Activated CD8-positive, alpha-beta memory T cell treated with anti-CD3 and anti-CD28 coated beads, Interleukin-2, amount 10 ng/mL, durations not matched to agents 7 days and 5 days (primary cell): ENCODE measurements at regions of chr11 and their contacts with region 1.

Region 1: GRCh38 chr11:66694732-66695207 is 17.1 kb upstream of the RBM4B start:
- DNase-seq: peak; percentile 86
- ATAC-seq: peak; percentile 79
- H3K4me3 Mint-ChIP-seq: no peak overlapping the region
- H3K27ac Mint-ChIP-seq: no peak overlapping the region
- H3K4me1 Mint-ChIP-seq: no peaks in the 10 kb centered on the region
- H3K27me3 Mint-ChIP-seq: no peaks in the 10 kb centered on the region

Region 2: GRCh38 chr11:66386171-66387069 is 308.4 kb before region 1 on chr11:
- CTCF ChIA-PET with region 1: no interaction called
- DNase-seq: peak; percentile 90
- ATAC-seq: peak; percentile 79
- H3K4me3 Mint-ChIP-seq: peak overlapping the region; percentile 16
- H3K27ac Mint-ChIP-seq: no peak overlapping the region
- H3K4me1 Mint-ChIP-seq: peaks cover 7% of the 10 kb centered on the region
- H3K27me3 Mint-ChIP-seq: peaks cover 15% of the 10 kb centered on the region

Region 3: GRCh38 chr11:66638177-66639065 is 56.3 kb before region 1 on chr11 and contains the start of gene RBM4:
- CTCF ChIA-PET with region 1: no interaction called
- DNase-seq: peak; percentile 99
- ATAC-seq: peak; percentile 97
- H3K4me3 Mint-ChIP-seq: peak within 1 kb of the TSS; percentile 87
- H3K27ac Mint-ChIP-seq: peak within 1 kb of the TSS; percentile 97
- H3K4me1 Mint-ChIP-seq: peaks cover 61% of the 10 kb centered on the region
- H3K27me3 Mint-ChIP-seq: no peaks in the 10 kb centered on the region
- total RNA-seq, gene RBM4: 111 to 119 TPM

Region 4: GRCh38 chr11:66834501-66834845 is 139.7 kb after region 1 on chr11:
- CTCF ChIA-PET with region 1: interaction called, 27 read pairs
- DNase-seq: no peak
- ATAC-seq: no peak
- H3K4me3 Mint-ChIP-seq: no peak overlapping the region
- H3K27ac Mint-ChIP-seq: no peak overlapping the region
- H3K4me1 Mint-ChIP-seq: peaks cover 5% of the 10 kb centered on the region
- H3K27me3 Mint-ChIP-seq: no peaks in the 10 kb centered on the region

Region 5: DNA sequence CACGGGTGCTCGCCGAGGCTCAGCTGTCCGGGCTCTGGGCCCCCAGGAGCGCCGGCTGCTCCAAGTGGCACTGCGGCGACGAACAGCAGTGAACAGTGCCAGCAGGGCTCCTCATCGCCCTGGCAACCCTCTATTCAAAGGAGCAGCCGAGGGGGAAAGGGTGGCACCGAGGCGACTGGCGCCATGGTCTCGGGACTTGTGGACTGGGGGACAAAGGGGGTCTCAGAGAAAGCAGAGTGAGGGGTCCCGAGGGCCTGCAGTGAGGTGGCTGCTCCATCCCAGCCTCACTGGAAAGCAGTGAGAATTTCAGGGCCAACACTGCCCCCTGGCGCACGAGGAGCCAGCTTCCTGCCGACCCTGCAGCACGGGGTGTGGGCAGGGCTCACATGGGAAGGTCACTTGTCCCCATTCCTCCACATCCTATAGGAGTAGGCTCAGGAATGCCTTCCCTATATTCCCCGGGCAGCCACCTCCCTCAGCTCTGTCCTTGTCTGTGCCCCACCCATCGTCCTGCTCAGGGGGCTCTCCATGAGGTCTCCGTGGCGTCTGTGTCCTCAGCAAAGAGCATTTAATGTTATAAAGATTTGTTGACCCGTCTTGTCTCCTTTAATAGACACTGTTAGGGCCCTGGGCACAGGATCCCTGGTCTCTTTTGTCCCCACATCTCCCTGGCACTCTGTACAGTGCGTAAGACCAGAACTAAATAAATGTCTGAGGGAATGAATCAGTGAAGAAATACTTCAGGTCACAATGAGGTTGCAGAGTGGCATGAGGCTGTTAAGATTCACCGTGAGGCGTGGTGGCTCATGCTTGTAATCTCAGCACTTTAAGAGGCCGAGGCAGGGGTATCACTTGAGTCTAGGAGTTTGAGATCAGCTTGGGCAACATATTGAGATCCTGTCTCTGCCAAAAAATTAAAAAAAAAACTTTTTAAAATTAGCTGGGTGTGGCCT is 188.5 kb after region 1 on chr11:
- CTCF ChIA-PET with region 1: interaction called, 12 read pairs
- DNase-seq: peak; percentile 74
- ATAC-seq: peak; percentile 73
- H3K4me3 Mint-ChIP-seq: no peak overlapping the region
- H3K27ac Mint-ChIP-seq: no peak overlapping the region
- H3K4me1 Mint-ChIP-seq: peaks cover 14% of the 10 kb centered on the region
- H3K27me3 Mint-ChIP-seq: no peaks in the 10 kb centered on the region